ENCODE measurements at regions of chr10 and their contacts with region 1.

Region 1: GRCh38 chr10:1109795-1110673 is 53.8 kb downstream of the WDR37 start:
- DNase-seq: peak; percentile 90
- ATAC-seq: peak; percentile 95
- H3K4me3 Mint-ChIP-seq: peak overlapping the region; percentile 49
- H3K27ac Mint-ChIP-seq: peak overlapping the region; percentile 73
- H3K4me1 Mint-ChIP-seq: peaks cover 32% of the 10 kb centered on the region
- H3K27me3 Mint-ChIP-seq: no peaks in the 10 kb centered on the region

Region 2: GRCh38 chr10:1043532-1043995 is 66.5 kb before region 1 on chr10:
- CTCF ChIA-PET with region 1: no interaction called
- POLR2A ChIA-PET with region 1: no interaction called
- intact Hi-C with region 1: no loop called
- DNase-seq: peak; percentile 39
- ATAC-seq: peak; percentile 48
- H3K4me3 Mint-ChIP-seq: peak overlapping the region; percentile 72
- H3K27ac Mint-ChIP-seq: peak overlapping the region; percentile 97
- H3K4me1 Mint-ChIP-seq: peaks cover 40% of the 10 kb centered on the region
- H3K27me3 Mint-ChIP-seq: no peaks in the 10 kb centered on the region

Region 3: DNA sequence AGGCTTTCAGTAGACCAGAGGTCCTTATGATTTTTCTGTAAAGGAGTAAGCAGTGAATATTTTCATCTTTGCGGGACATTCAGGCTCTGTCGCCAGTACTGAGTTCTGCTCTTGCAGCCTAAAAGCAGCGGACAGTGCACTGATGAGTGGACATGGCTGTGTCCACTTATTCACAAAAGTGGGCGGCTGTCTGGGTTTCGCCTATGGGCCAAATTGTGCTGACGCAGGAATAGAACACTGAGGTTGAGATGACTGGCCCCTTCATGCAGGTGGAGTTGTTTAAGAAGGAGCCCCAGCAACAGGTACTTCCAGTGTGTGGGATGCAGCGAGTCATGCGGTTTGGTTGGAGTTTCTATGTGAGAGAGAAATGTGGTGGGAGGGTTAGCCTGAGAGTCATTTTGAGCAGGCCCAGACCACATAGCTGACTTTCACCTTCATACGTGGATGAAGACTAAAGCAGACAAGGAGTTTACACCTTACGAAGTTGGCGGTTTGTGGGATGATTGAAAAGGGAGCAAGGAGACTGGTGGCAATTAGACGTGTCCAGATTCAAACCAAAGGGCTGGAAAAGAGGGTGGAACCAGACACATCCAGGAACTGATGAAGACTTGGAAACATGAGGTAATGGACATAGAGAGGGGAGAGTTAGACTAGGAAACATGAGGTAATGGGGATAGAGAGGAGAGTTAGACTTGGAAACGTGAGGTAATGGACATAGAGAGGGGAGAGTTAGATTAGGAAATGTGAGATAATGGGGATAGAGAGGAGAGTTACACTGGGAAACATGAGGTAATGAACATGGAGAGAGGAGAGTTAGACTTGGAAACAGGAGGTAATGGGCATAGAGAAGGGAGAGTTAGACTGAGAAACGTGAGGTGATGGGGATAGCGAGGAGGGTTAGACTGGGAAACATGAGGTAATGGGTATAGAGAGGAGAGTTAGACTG is 15.6 kb before region 1 on chr10:
- CTCF ChIA-PET with region 1: interaction called, 11 read pairs
- POLR2A ChIA-PET with region 1: no interaction called
- intact Hi-C with region 1: loop called (anchors 1 kb)
- DNase-seq: peak; percentile 89
- ATAC-seq: peak; percentile 95
- H3K4me3 Mint-ChIP-seq: no peak overlapping the region
- H3K27ac Mint-ChIP-seq: no peak overlapping the region
- H3K4me1 Mint-ChIP-seq: peaks cover 4% of the 10 kb centered on the region
- H3K27me3 Mint-ChIP-seq: no peaks in the 10 kb centered on the region

Region 4: DNA sequence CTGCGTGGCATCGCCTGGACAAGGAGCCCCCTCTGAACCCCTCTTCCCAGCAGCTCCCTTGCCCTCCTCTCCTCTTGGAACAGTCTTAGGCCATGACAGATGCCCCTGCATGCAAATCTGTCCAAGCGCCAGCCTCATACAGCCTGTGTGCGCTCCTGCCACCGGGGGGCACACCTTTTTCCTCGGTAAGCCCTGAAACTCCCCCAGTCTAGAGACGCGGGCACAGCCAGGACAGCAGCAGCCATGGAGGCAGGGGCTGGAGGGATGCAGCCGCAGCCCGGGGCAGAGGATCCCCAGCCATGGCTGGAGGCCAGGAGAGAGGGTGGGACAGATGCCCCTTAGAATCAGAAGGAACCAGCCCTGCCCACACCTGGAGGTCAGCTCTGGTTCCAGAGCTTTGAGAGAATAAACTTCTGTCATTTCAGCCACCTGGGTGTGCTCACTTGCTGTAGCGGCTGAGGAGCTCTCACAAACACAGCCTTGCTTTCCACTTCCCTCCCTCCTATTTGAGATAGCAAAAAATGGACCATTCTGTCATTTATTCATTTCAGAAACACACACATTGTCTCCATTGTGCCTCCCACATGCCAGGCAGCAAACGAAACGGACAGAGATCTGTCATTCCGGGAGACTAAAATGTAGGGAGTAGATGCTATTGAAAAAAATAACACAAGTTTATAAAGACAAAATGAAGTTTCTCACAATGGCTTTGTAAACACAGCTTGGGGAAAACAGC is 187.7 kb after region 1 on chr10:
- CTCF ChIA-PET with region 1: no interaction called
- POLR2A ChIA-PET with region 1: no interaction called
- intact Hi-C with region 1: no loop called
- DNase-seq: peak; percentile 20
- ATAC-seq: no peak
- H3K4me3 Mint-ChIP-seq: no peak overlapping the region
- H3K27ac Mint-ChIP-seq: no peak overlapping the region
- H3K4me1 Mint-ChIP-seq: peaks cover 2% of the 10 kb centered on the region
- H3K27me3 Mint-ChIP-seq: peaks cover 16% of the 10 kb centered on the region

Region 5: DNA sequence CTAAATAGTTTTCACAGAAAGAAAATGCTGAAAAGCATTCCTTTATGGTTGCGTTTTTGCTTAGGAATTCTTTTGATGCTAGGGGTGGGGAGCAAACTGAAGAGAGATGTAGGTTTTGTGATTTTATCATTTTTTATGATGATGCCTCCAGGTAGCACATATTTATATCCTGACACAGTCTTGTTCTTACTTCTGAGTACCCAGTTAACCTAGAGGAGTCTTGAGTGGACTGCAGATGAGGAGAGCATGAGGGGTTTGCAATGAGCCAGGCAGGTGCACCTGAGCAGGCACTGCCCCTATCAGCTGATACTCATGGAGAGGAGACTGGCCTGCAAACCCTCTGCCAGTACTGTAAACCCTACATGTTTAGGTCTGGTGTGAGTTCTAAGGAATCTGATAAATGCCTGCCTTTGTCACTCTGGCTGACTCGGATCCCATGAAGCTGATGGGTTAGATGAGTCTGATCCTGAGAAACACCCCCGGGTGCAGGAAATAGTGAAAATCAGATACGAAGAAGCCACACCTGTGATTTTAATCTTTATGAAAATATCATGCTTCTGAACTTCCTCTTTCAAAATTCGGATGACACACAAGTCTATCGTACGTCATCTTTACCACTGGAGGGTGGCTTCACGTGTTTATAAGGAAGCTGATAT is 249.0 kb after region 1 on chr10:
- CTCF ChIA-PET with region 1: no interaction called
- POLR2A ChIA-PET with region 1: no interaction called
- intact Hi-C with region 1: loop called in 1 of 2 experiments (anchors 1 kb)
- DNase-seq: peak; percentile 44
- ATAC-seq: peak; percentile 89
- H3K4me3 Mint-ChIP-seq: no peak overlapping the region
- H3K27ac Mint-ChIP-seq: peak overlapping the region; percentile 11
- H3K4me1 Mint-ChIP-seq: peaks cover 16% of the 10 kb centered on the region
- H3K27me3 Mint-ChIP-seq: peaks cover 15% of the 10 kb centered on the region

Region 6: GRCh38 chr10:1498746-1499358 is 388.8 kb after region 1 on chr10:
- CTCF ChIA-PET with region 1: no interaction called
- POLR2A ChIA-PET with region 1: no interaction called
- intact Hi-C with region 1: loop called in 1 of 2 experiments (anchors 2 kb)
- DNase-seq: no peak
- ATAC-seq: peak; percentile 67
- H3K4me3 Mint-ChIP-seq: no peak overlapping the region
- H3K27ac Mint-ChIP-seq: no peak overlapping the region
- H3K4me1 Mint-ChIP-seq: no peaks in the 10 kb centered on the region
- H3K27me3 Mint-ChIP-seq: no peaks in the 10 kb centered on the region

Region 7: GRCh38 chr10:1643161-1643907 is 533.3 kb after region 1 on chr10:
- CTCF ChIA-PET with region 1: no interaction called
- POLR2A ChIA-PET with region 1: no interaction called
- intact Hi-C with region 1: loop called in 1 of 2 experiments (anchors 1 kb)
- DNase-seq: peak; percentile 56
- ATAC-seq: peak; percentile 88
- H3K4me3 Mint-ChIP-seq: peak overlapping the region; percentile 28
- H3K27ac Mint-ChIP-seq: peak overlapping the region; percentile 93
- H3K4me1 Mint-ChIP-seq: peaks cover 16% of the 10 kb centered on the region
- H3K27me3 Mint-ChIP-seq: peaks cover 12% of the 10 kb centered on the region

Region 8: DNA sequence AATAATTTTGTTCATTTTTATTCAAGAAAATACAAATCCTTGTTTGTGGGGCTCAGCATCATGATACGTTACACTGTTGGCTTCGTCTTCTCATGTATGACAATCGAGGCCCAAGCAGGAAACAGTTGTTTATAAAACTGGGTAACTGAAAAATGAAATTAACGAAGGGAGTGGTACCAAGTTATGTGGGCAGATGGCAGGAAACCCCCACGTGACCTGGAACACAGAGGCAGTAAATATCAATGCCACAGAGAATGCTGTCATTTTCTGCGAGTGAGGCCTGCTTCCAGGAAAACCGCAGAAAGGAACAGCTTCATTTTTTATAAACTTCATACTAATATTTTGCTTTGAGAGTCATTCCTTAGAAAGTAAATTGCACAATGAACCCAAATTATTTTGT is 828.3 kb after region 1 on chr10:
- CTCF ChIA-PET with region 1: no interaction called
- POLR2A ChIA-PET with region 1: no interaction called
- intact Hi-C with region 1: loop called in 1 of 2 experiments (anchors 2 kb)
- DNase-seq: peak; percentile 81
- ATAC-seq: peak; percentile 59
- H3K4me3 Mint-ChIP-seq: no peak overlapping the region
- H3K27ac Mint-ChIP-seq: peak overlapping the region; percentile 95
- H3K4me1 Mint-ChIP-seq: peaks cover 39% of the 10 kb centered on the region
- H3K27me3 Mint-ChIP-seq: no peaks in the 10 kb centered on the region